CD8-positive, alpha-beta T cell (primary cell): ENCODE measurements at regions of chr1 and their contacts with region 1.

Region 1: DNA sequence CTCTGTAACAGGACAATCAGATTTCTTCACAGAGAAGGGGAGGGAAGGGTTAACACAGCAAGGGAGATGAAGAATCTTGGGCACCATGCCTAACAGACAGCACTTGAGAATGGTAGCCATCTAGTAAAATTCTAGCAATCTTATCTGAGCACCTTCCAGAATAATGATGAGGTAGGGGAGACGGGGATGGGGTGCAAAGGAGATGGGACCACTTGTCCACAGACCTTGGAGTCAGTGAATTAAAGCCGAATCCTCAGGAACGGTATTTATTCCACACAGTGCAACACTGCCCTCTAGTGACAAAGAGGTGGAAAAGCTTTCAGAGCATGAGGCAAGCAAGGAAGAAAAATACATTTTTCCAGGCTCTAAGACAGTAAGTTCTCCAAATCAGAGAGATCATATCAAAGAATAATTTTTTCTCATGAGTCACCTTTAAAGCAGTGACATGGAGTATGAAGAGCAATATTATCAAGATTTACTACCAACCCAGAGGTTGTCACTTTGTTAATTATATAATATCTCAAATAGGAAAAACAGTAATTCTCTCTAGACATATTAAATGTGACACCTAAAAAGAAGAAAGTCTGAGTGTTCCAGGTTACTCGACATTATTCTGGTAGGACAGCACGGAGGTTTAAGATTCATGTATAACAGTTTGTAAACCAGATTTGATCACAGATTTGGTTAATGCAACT is 43.3 kb upstream of the LPAR3 start:
- DNase-seq: peak in 7 of 9 experiments; percentile 10 to 79 (median 35)
- ATAC-seq: peak; percentile 73
- H3K4me3 ChIP-seq: no peak overlapping the region
- H3K4me3 Mint-ChIP-seq: no peak overlapping the region
- H3K27ac ChIP-seq: no peak overlapping the region
- H3K27ac Mint-ChIP-seq: no peak overlapping the region
- H3K4me1 ChIP-seq: peaks cover 5% of the 10 kb centered on the region
- H3K4me1 Mint-ChIP-seq: peaks cover 4% of the 10 kb centered on the region
- H3K27me3 ChIP-seq: no peaks in the 10 kb centered on the region
- H3K27me3 Mint-ChIP-seq: no peaks in the 10 kb centered on the region
- CTCF ChIP-seq: peak; percentile 98

Region 2: GRCh38 chr1:83905315-83905907 is 1030.9 kb before region 1 on chr1:
- CTCF ChIA-PET with region 1: interaction called, 3 read pairs
- POLR2A ChIA-PET with region 1: no interaction called
- intact Hi-C with region 1: loop called in 1 of 2 experiments (anchors 2 kb)
- DNase-seq: peak in 3 of 9 experiments; percentile 7 to 50 (median 40)
- ATAC-seq: peak; percentile 46
- H3K4me3 ChIP-seq: no peak overlapping the region
- H3K4me3 Mint-ChIP-seq: no peak overlapping the region
- H3K27ac ChIP-seq: no peak overlapping the region
- H3K27ac Mint-ChIP-seq: no peak overlapping the region
- H3K4me1 ChIP-seq: no peaks in the 10 kb centered on the region
- H3K4me1 Mint-ChIP-seq: no peaks in the 10 kb centered on the region
- H3K27me3 ChIP-seq: no peaks in the 10 kb centered on the region
- H3K27me3 Mint-ChIP-seq: peaks cover 9% of the 10 kb centered on the region
- CTCF ChIP-seq: peak; percentile 79

Region 3: GRCh38 chr1:83931658-83932253 is 1004.5 kb before region 1 on chr1:
- CTCF ChIA-PET with region 1: interaction called, 3 read pairs
- POLR2A ChIA-PET with region 1: no interaction called
- intact Hi-C with region 1: loop called (anchors 1 to 5 kb)
- DNase-seq: peak in 3 of 9 experiments; percentile 11 to 69 (median 58)
- ATAC-seq: peak; percentile 69
- H3K4me3 ChIP-seq: no peak overlapping the region
- H3K4me3 Mint-ChIP-seq: no peak overlapping the region
- H3K27ac ChIP-seq: no peak overlapping the region
- H3K27ac Mint-ChIP-seq: no peak overlapping the region
- H3K4me1 ChIP-seq: no peaks in the 10 kb centered on the region
- H3K4me1 Mint-ChIP-seq: no peaks in the 10 kb centered on the region
- H3K27me3 ChIP-seq: no peaks in the 10 kb centered on the region
- H3K27me3 Mint-ChIP-seq: peaks cover 7% of the 10 kb centered on the region
- CTCF ChIP-seq: peak; percentile 86

Region 4: GRCh38 chr1:84668185-84668584 is 268.1 kb before region 1 on chr1:
- CTCF ChIA-PET with region 1: interaction called, 3 read pairs
- POLR2A ChIA-PET with region 1: no interaction called
- intact Hi-C with region 1: loop called in 1 of 2 experiments (anchors 5 kb)
- DNase-seq: peak in 2 of 9 experiments; percentile 33 to 48
- ATAC-seq: peak; percentile 36
- H3K4me3 ChIP-seq: no peak overlapping the region
- H3K4me3 Mint-ChIP-seq: no peak overlapping the region
- H3K27ac ChIP-seq: no peak overlapping the region
- H3K27ac Mint-ChIP-seq: no peak overlapping the region
- H3K4me1 ChIP-seq: no peaks in the 10 kb centered on the region
- H3K4me1 Mint-ChIP-seq: peaks cover 9% of the 10 kb centered on the region
- H3K27me3 ChIP-seq: no peaks in the 10 kb centered on the region
- H3K27me3 Mint-ChIP-seq: no peaks in the 10 kb centered on the region
- CTCF ChIP-seq: no peak

Region 5: GRCh38 chr1:84781946-84782771 is 154.1 kb before region 1 on chr1:
- CTCF ChIA-PET with region 1: interaction called, 12 read pairs
- POLR2A ChIA-PET with region 1: interaction called, 3 read pairs
- intact Hi-C with region 1: loop called in 1 of 2 experiments (anchors 1 kb)
- DNase-seq: peak; percentile 58 to 88 (median 79)
- ATAC-seq: peak; percentile 92
- H3K4me3 ChIP-seq: peak overlapping the region; percentile 23 to 36
- H3K4me3 Mint-ChIP-seq: peak overlapping the region; percentile 75
- H3K27ac ChIP-seq: no peak overlapping the region
- H3K27ac Mint-ChIP-seq: no peak overlapping the region
- H3K4me1 ChIP-seq: peaks cover 29% of the 10 kb centered on the region
- H3K4me1 Mint-ChIP-seq: peaks cover 33% of the 10 kb centered on the region
- H3K27me3 ChIP-seq: no peaks in the 10 kb centered on the region
- H3K27me3 Mint-ChIP-seq: no peaks in the 10 kb centered on the region
- CTCF ChIP-seq: peak; percentile 61

Region 6: GRCh38 chr1:84797603-84798002 is 138.7 kb before region 1 on chr1:
- CTCF ChIA-PET with region 1: no interaction called
- POLR2A ChIA-PET with region 1: no interaction called
- intact Hi-C with region 1: no loop called
- DNase-seq: no peak
- ATAC-seq: no peak
- H3K4me3 ChIP-seq: no peak overlapping the region
- H3K4me3 Mint-ChIP-seq: no peak overlapping the region
- H3K27ac ChIP-seq: no peak overlapping the region
- H3K27ac Mint-ChIP-seq: no peak overlapping the region
- H3K4me1 ChIP-seq: no peaks in the 10 kb centered on the region
- H3K4me1 Mint-ChIP-seq: peaks cover 4% of the 10 kb centered on the region
- H3K27me3 ChIP-seq: no peaks in the 10 kb centered on the region
- H3K27me3 Mint-ChIP-seq: no peaks in the 10 kb centered on the region
- CTCF ChIP-seq: no peak

Region 7: GRCh38 chr1:84892705-84893618 is 43.3 kb before region 1 on chr1 and contains the start of gene LPAR3:
- CTCF ChIA-PET with region 1: no interaction called
- POLR2A ChIA-PET with region 1: no interaction called
- intact Hi-C with region 1: no loop called
- DNase-seq: peak in 4 of 9 experiments; percentile 39 to 55 (median 41)
- ATAC-seq: peak; percentile 49
- H3K4me3 ChIP-seq: peak within 1 kb of the TSS; percentile 39 to 56
- H3K4me3 Mint-ChIP-seq: peak within 1 kb of the TSS; percentile 79
- H3K27ac ChIP-seq: no peak within 1 kb of the TSS
- H3K27ac Mint-ChIP-seq: no peak within 1 kb of the TSS
- H3K4me1 ChIP-seq: peaks cover 12% of the 10 kb centered on the region
- H3K4me1 Mint-ChIP-seq: peaks cover 15% of the 10 kb centered on the region
- H3K27me3 ChIP-seq: peaks cover 5 to 8% of the 10 kb centered on the region in 2 experiments
- H3K27me3 Mint-ChIP-seq: peaks cover 33% of the 10 kb centered on the region
- CTCF ChIP-seq: no peak
- total RNA-seq, gene LPAR3: 0.58 to 0.90 TPM